PC-3 (cell line): ENCODE measurements at regions of chr5 and their contacts with region 1.

Region 1: DNA sequence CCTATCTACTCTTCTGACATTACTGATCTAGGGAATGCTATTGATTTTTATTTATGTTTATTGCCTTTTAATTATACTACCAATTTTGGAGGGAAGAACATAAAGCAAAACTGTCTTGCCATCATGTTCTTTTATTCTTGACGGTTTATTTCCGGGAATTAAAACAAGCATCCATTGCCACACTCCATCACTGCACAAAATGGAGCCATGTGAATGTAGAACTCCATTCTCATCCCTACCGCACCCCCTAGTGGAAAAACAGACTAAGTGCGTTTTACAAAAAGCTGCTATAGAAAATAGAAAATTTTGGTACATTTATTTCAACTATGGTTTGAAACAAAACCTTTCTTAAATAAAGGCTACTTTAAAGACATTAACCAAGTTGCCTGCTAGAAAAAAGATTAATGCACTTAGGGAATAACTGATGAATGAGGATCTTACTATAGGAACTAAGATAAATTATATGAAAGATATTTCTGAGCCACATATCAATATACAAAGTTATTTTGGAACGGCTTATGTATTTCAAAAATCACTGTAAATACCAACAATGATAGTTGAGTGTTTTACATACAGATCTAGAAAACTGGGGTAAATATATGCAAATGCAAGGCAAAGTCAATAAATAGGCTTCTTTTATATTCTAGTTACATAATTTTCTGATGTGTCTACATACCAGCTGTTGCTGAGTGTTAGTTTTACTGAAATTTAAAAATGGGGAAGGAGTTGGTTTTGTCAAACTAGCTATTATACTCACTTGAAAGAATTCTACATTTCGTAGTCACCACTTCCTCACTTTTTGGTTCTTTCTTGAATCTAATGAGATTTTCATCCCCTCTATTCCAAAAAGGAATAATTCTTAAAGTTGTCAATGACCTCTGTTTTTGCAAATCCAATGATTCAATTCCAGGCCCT is 26.5 kb downstream of the OXCT1 start:
- DNase-seq: peak; percentile 71
- ATAC-seq: peak; percentile 62
- H3K4me3 ChIP-seq: no peak overlapping the region
- H3K27ac ChIP-seq: no peak overlapping the region
- H3K4me1 ChIP-seq: no peaks in the 10 kb centered on the region
- H3K27me3 ChIP-seq: no peaks in the 10 kb centered on the region
- CTCF ChIP-seq: peak; percentile 97

Region 2: GRCh38 chr5:41707853-41708603 is 135.7 kb before region 1 on chr5:
- CTCF ChIA-PET with region 1: interaction called, 6 read pairs
- POLR2A ChIA-PET with region 1: no interaction called
- intact Hi-C with region 1: loop called (anchors 1 kb)
- DNase-seq: peak; percentile 80
- ATAC-seq: peak; percentile 97
- H3K4me3 ChIP-seq: no peak overlapping the region
- H3K27ac ChIP-seq: no peak overlapping the region
- H3K4me1 ChIP-seq: no peaks in the 10 kb centered on the region
- H3K27me3 ChIP-seq: no peaks in the 10 kb centered on the region
- CTCF ChIP-seq: peak; percentile 90

Region 3: DNA sequence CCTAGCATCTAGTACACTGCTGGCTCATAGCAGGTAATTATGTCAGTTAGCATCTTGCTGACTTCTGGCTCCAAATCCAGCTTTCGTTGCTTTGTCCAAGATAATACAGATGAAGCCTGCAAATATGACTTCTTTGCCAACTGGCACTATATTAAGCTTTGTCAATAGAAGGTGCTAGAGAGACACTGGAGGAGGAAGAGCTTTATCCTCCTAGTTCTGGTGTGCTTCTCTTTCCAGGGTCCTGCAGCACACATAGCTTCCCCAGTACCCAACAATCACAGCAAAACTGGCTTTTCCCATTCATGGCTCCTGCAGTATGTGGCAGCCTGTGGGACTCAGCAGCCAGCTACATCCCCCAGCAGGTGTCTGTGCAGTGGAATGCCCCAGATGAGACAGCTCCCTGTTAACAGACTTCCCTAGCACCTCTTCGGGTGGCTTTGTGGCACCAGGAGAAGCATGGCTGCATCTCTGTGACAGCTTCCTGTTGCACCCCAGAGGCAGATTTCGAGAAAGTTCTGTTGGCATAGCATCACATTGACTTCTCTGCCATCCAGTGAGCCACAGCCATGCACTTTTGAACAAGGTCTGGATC is 121.3 kb before region 1 on chr5:
- CTCF ChIA-PET with region 1: interaction called, 10 read pairs
- POLR2A ChIA-PET with region 1: no interaction called
- intact Hi-C with region 1: loop called (anchors 5 kb)
- DNase-seq: peak; percentile 30
- ATAC-seq: peak; percentile 67
- H3K4me3 ChIP-seq: no peak overlapping the region
- H3K27ac ChIP-seq: no peak overlapping the region
- H3K4me1 ChIP-seq: no peaks in the 10 kb centered on the region
- H3K27me3 ChIP-seq: no peaks in the 10 kb centered on the region
- CTCF ChIP-seq: peak; percentile 50